CD14-positive monocyte (primary cell): ENCODE measurements at regions of chr12 and their contacts with region 1.

Region 1: GRCh38 chr12:6383572-6384498 is at the start of gene LTBR:
- DNase-seq: peak; percentile 84 to 92 (median 91)
- H3K4me3 ChIP-seq: peak within 1 kb of the TSS; percentile 77 to 90 (median 85)
- H3K4me3 Mint-ChIP-seq: peak within 1 kb of the TSS; percentile 88 to 95
- H3K27ac ChIP-seq: peak within 1 kb of the TSS; percentile 89 to 91
- H3K27ac Mint-ChIP-seq: peak within 1 kb of the TSS; percentile 87 to 94 (median 91)
- H3K4me1 ChIP-seq: peaks cover 73 to 85% of the 10 kb centered on the region in 2 donors
- H3K4me1 Mint-ChIP-seq: peaks cover 88% of the 10 kb centered on the region
- H3K27me3 ChIP-seq: no peaks in the 10 kb centered on the region
- H3K27me3 Mint-ChIP-seq: no peaks in the 10 kb centered on the region
- CTCF ChIP-seq: no peak
- polyA plus RNA-seq, gene LTBR: 56.4 to 108 (median 60.6) TPM

Region 2: GRCh38 chr12:6323340-6323994 is 60.4 kb before region 1 on chr12:
- intact Hi-C with region 1: loop called in 1 of 2 experiments (anchors 5 kb)
- DNase-seq: peak; percentile 66 to 95 (median 89)
- H3K4me3 ChIP-seq: peak overlapping the region in 1 of 3 experiments; percentile 41
- H3K4me3 Mint-ChIP-seq: peak overlapping the region; percentile 72 to 82
- H3K27ac ChIP-seq: peak overlapping the region; percentile 17 to 38
- H3K27ac Mint-ChIP-seq: peak overlapping the region; percentile 81 to 95 (median 87)
- H3K4me1 ChIP-seq: peaks cover 39 to 50% of the 10 kb centered on the region in 2 donors
- H3K4me1 Mint-ChIP-seq: peaks cover 52% of the 10 kb centered on the region
- H3K27me3 ChIP-seq: peaks cover 0 to 4% of the 10 kb centered on the region in 2 donors
- H3K27me3 Mint-ChIP-seq: peaks cover 14 to 22% (median 21%) of the 10 kb centered on the region in 3 donors
- CTCF ChIP-seq: peak; percentile 72

Region 3: DNA sequence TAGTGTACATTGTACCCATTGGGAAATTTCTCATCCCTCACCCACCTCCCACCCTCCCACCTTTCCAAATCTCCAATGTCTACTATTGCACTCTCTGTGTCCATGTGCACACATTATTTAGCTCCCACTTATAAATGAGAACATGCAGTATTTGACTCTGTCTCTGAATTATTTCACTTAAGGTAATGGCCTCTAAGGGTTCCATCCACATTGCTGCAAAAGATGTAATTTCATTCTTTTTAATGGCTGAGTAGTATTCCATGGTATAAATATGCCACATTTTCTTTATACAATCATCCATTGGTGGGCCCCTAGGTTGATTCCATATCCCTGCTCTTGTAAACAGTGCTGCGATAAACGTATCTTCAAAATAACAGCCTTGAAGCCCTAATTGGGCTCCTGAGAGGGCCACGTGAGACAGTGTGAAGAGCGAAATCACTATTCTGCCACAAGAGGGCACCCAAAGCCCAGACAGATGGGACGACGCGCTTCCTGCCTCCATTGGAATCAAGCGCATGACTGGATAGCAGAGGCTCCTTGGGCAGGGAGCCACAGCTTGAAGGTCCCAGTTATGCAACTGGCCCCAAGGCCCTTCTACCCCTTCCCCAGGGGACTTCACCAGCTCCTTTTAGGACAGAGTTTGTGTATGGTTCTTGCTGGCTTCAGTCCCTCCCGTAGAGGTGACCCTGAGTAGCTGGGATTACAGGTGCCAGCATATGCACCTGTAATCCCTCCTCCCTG is 39.6 kb after region 1 on chr12:
- intact Hi-C with region 1: no loop called
- DNase-seq: peak; percentile 90 to 94 (median 93)
- H3K4me3 ChIP-seq: no peak overlapping the region
- H3K4me3 Mint-ChIP-seq: no peak overlapping the region
- H3K27ac ChIP-seq: peak overlapping the region in 1 of 2 donors; percentile 15
- H3K27ac Mint-ChIP-seq: peak overlapping the region in 4 of 7 donors; percentile 7 to 52 (median 26)
- H3K4me1 ChIP-seq: peaks cover 20 to 29% of the 10 kb centered on the region in 2 donors
- H3K4me1 Mint-ChIP-seq: peaks cover 22% of the 10 kb centered on the region
- H3K27me3 ChIP-seq: no peaks in the 10 kb centered on the region
- H3K27me3 Mint-ChIP-seq: peaks cover 0 to 4% (median 0%) of the 10 kb centered on the region in 3 donors
- CTCF ChIP-seq: peak; percentile 85